Aorta (tissue), 5 donors: ENCODE measurements at regions of chr1 and their contacts with region 1.

Region 1: GRCh38 chr1:225548140-225548857 is 104.6 kb downstream of the ENAH start:
- DNase-seq: no peak
- ATAC-seq: no peak
- H3K4me3 ChIP-seq: no peak overlapping the region
- H3K27ac ChIP-seq: peak overlapping the region in 1 of 2 donors; percentile 44
- H3K4me1 ChIP-seq: peaks cover 0 to 6% of the 10 kb centered on the region in 2 donors
- H3K27me3 ChIP-seq: no peaks in the 10 kb centered on the region

Region 2: GRCh38 chr1:225480825-225481434 is 67.4 kb before region 1 on chr1:
- intact Hi-C with region 1: loop called in 1 of 2 experiments (anchors 10 kb)
- DNase-seq: peak; percentile 48 to 79
- ATAC-seq: peak; percentile 42
- H3K4me3 ChIP-seq: no peak overlapping the region
- H3K27ac ChIP-seq: no peak overlapping the region
- H3K4me1 ChIP-seq: peaks cover 0 to 2% of the 10 kb centered on the region in 2 donors
- H3K27me3 ChIP-seq: no peaks in the 10 kb centered on the region

Region 3: GRCh38 chr1:225712391-225712790 is 164.1 kb after region 1 on chr1:
- intact Hi-C with region 1: no loop called
- DNase-seq: no peak
- ATAC-seq: no peak
- H3K4me3 ChIP-seq: no peak overlapping the region
- H3K27ac ChIP-seq: no peak overlapping the region
- H3K4me1 ChIP-seq: peaks cover 0 to 3% of the 10 kb centered on the region in 2 donors
- H3K27me3 ChIP-seq: no peaks in the 10 kb centered on the region